ENCODE measurements at regions of chr17 and their contacts with region 1.

Region 1: GRCh38 chr17:43406676-43407645 is 8.2 kb downstream of the ARL4D start:
- DNase-seq: no peak
- H3K4me3 ChIP-seq: no peak overlapping the region
- H3K27ac ChIP-seq: no peak overlapping the region
- H3K4me1 ChIP-seq: peaks cover 47% of the 10 kb centered on the region
- H3K27me3 ChIP-seq: no peaks in the 10 kb centered on the region
- CTCF ChIP-seq: no peak

Region 2: GRCh38 chr17:43584666-43585102 is 177.7 kb after region 1 on chr17:
- CTCF ChIA-PET with region 1: no interaction called
- POLR2A ChIA-PET with region 1: interaction called, 30 read pairs
- intact Hi-C with region 1: no loop called
- DNase-seq: no peak
- H3K4me3 ChIP-seq: no peak overlapping the region
- H3K27ac ChIP-seq: no peak overlapping the region
- H3K4me1 ChIP-seq: peaks cover 18% of the 10 kb centered on the region
- H3K27me3 ChIP-seq: no peaks in the 10 kb centered on the region
- CTCF ChIP-seq: no peak

Region 3: DNA sequence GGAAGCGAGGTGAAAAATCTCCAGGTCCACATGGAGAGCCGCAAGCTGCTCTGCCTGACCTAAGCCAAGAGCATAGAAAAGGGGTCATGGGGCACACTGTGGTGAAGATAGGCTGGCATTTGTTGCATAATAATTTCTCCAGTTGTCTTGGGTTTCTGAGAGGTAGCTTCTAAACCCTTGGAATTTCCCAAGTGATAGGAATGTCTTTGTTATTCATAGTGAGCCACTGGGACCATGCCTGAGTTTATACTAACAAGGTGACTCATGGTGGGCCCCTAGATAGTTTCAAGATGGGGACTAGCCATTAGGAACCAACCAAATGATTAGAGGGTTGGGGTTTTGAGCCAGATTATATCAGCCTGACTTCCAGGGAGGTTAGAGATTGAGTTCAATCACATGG is 326.0 kb after region 1 on chr17:
- CTCF ChIA-PET with region 1: no interaction called
- POLR2A ChIA-PET with region 1: interaction called, 19 read pairs
- intact Hi-C with region 1: no loop called
- DNase-seq: peak in 1 of 2 experiments; percentile 69
- H3K4me3 ChIP-seq: no peak overlapping the region
- H3K27ac ChIP-seq: no peak overlapping the region
- H3K4me1 ChIP-seq: peaks cover 7% of the 10 kb centered on the region
- H3K27me3 ChIP-seq: no peaks in the 10 kb centered on the region
- CTCF ChIP-seq: no peak

Measured in PC-9 (cell line).